ENCODE measurements at regions of chr4 and their contacts with region 1.

Region 1: GRCh38 chr4:184649026-184649970 is at the starts of genes CASP3 and PRIMPOL:
- DNase-seq: peak; percentile 90 to 99 (median 96)
- ATAC-seq: peak; percentile 85
- H3K4me3 ChIP-seq: peak within 1 kb of the TSS; percentile 93
- H3K4me3 Mint-ChIP-seq: peak within 1 kb of the TSS; percentile 96
- H3K27ac ChIP-seq: peak within 1 kb of the TSS; percentile 72 to 77
- H3K27ac Mint-ChIP-seq: peak within 1 kb of the TSS; percentile 96
- H3K4me1 ChIP-seq: peaks cover 37% of the 10 kb centered on the region
- H3K4me1 Mint-ChIP-seq: peaks cover 51% of the 10 kb centered on the region
- H3K27me3 ChIP-seq: no peaks in the 10 kb centered on the region
- H3K27me3 Mint-ChIP-seq: no peaks in the 10 kb centered on the region
- CTCF ChIP-seq: peak; percentile 24
- total RNA-seq, gene CASP3: 11.9 to 12.2 TPM
- total RNA-seq, gene PRIMPOL: 4.2 TPM

Region 2: DNA sequence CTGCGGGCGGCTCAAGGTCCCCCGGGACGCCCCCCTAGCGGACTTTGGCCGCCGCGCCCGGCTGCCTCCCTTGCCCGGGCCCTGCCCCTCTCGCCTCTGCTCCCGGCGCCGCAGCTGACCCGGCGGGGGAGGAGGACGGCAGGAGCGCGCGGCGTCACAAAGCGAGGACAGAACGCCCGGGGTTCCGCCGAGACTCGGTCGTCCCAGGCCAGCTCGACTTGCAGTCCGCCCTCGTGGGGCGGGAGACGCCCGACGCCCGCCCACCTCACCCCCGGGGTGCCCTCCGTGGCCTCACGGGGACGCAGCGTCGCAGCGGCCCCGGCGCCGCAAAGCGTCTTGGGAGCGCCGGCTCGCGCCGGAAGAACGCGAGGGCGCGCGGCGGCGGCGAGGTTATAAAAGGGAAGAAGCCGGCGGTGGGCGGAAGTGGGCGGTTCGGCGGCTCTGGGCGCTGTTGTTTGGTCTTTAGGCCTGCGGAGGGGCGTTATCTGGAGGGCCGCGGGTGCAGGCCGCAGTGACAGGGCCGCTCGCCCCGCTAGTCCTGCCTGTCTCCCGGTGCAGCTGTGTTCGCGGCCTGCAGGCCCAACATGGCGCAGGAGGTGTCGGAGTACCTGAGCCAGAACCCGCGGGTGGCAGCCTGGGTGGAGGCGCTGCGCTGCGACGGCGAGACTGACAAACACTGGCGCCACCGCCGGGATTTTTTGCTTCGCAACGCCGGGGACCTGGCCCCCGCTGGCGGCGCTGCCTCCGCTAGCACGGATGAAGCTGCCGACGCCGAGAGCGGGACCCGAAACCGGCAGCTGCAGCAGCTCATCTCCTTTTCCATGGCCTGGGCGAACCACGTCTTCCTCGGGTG is 1204.9 kb before region 1 on chr4 and contains the start of gene CDKN2AIP:
- CTCF ChIA-PET with region 1: no interaction called
- POLR2A ChIA-PET with region 1: interaction called, 3 read pairs
- intact Hi-C with region 1: loop called in 1 of 2 experiments (anchors 5 kb)
- DNase-seq: peak; percentile 89 to 98 (median 94)
- ATAC-seq: peak; percentile 82
- H3K4me3 ChIP-seq: peak within 1 kb of the TSS; percentile 94
- H3K4me3 Mint-ChIP-seq: peak within 1 kb of the TSS; percentile 98
- H3K27ac ChIP-seq: peak within 1 kb of the TSS; percentile 91
- H3K27ac Mint-ChIP-seq: peak within 1 kb of the TSS; percentile 96
- H3K4me1 ChIP-seq: peaks cover 26% of the 10 kb centered on the region
- H3K4me1 Mint-ChIP-seq: peaks cover 55% of the 10 kb centered on the region
- H3K27me3 ChIP-seq: no peaks in the 10 kb centered on the region
- H3K27me3 Mint-ChIP-seq: no peaks in the 10 kb centered on the region
- CTCF ChIP-seq: no peak
- total RNA-seq, gene CDKN2AIP: 55.7 to 56.9 TPM

Region 3: GRCh38 chr4:184408021-184408710 is 241.1 kb before region 1 on chr4:
- CTCF ChIA-PET with region 1: interaction called, 3 read pairs
- POLR2A ChIA-PET with region 1: no interaction called
- intact Hi-C with region 1: loop called in 1 of 2 experiments (anchors 5 kb)
- DNase-seq: no peak
- ATAC-seq: no peak
- H3K4me3 ChIP-seq: no peak overlapping the region
- H3K4me3 Mint-ChIP-seq: no peak overlapping the region
- H3K27ac ChIP-seq: peak overlapping the region in 1 of 2 donors; percentile 26
- H3K27ac Mint-ChIP-seq: no peak overlapping the region
- H3K4me1 ChIP-seq: peaks cover 30% of the 10 kb centered on the region
- H3K4me1 Mint-ChIP-seq: peaks cover 45% of the 10 kb centered on the region
- H3K27me3 ChIP-seq: no peaks in the 10 kb centered on the region
- H3K27me3 Mint-ChIP-seq: no peaks in the 10 kb centered on the region
- CTCF ChIP-seq: no peak

Region 4: GRCh38 chr4:184733654-184734524 is 84.6 kb after region 1 on chr4 and contains the start of gene CENPU:
- CTCF ChIA-PET with region 1: interaction called, 5 read pairs
- POLR2A ChIA-PET with region 1: interaction called, 35 read pairs
- intact Hi-C with region 1: loop called (anchors 1 to 10 kb)
- DNase-seq: peak; percentile 91 to 98 (median 93)
- ATAC-seq: peak; percentile 97
- H3K4me3 ChIP-seq: peak within 1 kb of the TSS; percentile 87
- H3K4me3 Mint-ChIP-seq: peak within 1 kb of the TSS; percentile 93
- H3K27ac ChIP-seq: no peak within 1 kb of the TSS
- H3K27ac Mint-ChIP-seq: peak within 1 kb of the TSS; percentile 74
- H3K4me1 ChIP-seq: peaks cover 13% of the 10 kb centered on the region
- H3K4me1 Mint-ChIP-seq: peaks cover 17% of the 10 kb centered on the region
- H3K27me3 ChIP-seq: no peaks in the 10 kb centered on the region
- H3K27me3 Mint-ChIP-seq: no peaks in the 10 kb centered on the region
- CTCF ChIP-seq: no peak
- total RNA-seq, gene CENPU: 1.9 to 2.8 TPM

Region 5: GRCh38 chr4:184825896-184826690 is 176.8 kb after region 1 on chr4 and contains the start of gene ACSL1:
- CTCF ChIA-PET with region 1: no interaction called
- POLR2A ChIA-PET with region 1: interaction called, 3 read pairs
- intact Hi-C with region 1: loop called (anchors 2 to 10 kb)
- DNase-seq: peak; percentile 58 to 90 (median 72)
- ATAC-seq: peak; percentile 85
- H3K4me3 ChIP-seq: peak within 1 kb of the TSS; percentile 59
- H3K4me3 Mint-ChIP-seq: peak within 1 kb of the TSS; percentile 97
- H3K27ac ChIP-seq: peak within 1 kb of the TSS in 1 of 2 donors; percentile 31
- H3K27ac Mint-ChIP-seq: peak within 1 kb of the TSS; percentile 92
- H3K4me1 ChIP-seq: peaks cover 23% of the 10 kb centered on the region
- H3K4me1 Mint-ChIP-seq: peaks cover 40% of the 10 kb centered on the region
- H3K27me3 ChIP-seq: no peaks in the 10 kb centered on the region
- H3K27me3 Mint-ChIP-seq: no peaks in the 10 kb centered on the region
- CTCF ChIP-seq: no peak
- total RNA-seq, gene ACSL1: 12.4 to 12.5 TPM

Region 6: GRCh38 chr4:185142912-185143595 is 493.8 kb after region 1 on chr4 and contains the start of gene SLC25A4:
- CTCF ChIA-PET with region 1: no interaction called
- POLR2A ChIA-PET with region 1: no interaction called
- intact Hi-C with region 1: loop called in 1 of 2 experiments (anchors 10 kb)
- DNase-seq: peak; percentile 59 to 91 (median 78)
- ATAC-seq: peak; percentile 93
- H3K4me3 ChIP-seq: peak within 1 kb of the TSS; percentile 72
- H3K4me3 Mint-ChIP-seq: peak within 1 kb of the TSS; percentile 96
- H3K27ac ChIP-seq: no peak within 1 kb of the TSS
- H3K27ac Mint-ChIP-seq: peak within 1 kb of the TSS; percentile 63
- H3K4me1 ChIP-seq: peaks cover 14% of the 10 kb centered on the region
- H3K4me1 Mint-ChIP-seq: peaks cover 18% of the 10 kb centered on the region
- H3K27me3 ChIP-seq: peaks cover 11 to 12% of the 10 kb centered on the region in 2 experiments
- H3K27me3 Mint-ChIP-seq: peaks cover 53% of the 10 kb centered on the region
- CTCF ChIP-seq: peak; percentile 34
- total RNA-seq, gene SLC25A4: 4.1 TPM

Region 7: DNA sequence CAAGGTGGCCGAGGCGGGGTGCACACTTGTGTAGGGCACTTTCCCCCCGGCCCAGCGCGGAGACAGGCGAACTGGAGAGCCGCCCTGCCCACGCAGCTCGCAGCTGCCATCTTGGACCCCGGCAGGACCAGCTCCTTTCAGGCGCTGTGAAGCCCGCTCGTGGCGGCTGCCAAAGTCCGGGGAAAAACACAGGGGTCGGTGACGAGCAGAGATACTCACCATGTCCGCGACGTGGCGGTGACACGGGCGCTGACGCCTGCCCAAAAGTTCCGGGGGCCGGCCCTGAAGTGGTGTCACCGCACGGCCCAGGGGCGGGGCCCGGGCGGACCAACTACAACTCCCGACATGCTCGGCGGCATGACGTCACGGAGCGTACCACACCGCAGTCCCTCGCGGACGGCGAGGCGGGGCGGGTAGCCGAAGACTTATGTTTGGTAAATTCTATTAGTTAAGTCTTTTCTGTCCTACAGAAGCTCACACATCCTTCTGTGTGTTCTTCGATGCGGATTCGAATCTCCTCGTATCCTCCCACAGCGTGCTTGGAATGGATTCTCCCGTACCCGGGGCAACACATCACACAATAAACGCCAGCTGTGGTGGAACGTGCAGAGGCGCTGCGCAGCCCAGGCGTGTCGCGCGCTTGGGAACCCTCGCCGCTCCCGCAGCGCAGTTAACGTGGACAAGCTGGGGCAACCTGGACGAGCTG is 776.5 kb after region 1 on chr4 and contains the start of gene UFSP2:
- CTCF ChIA-PET with region 1: no interaction called
- POLR2A ChIA-PET with region 1: interaction called, 3 read pairs
- intact Hi-C with region 1: loop called in 1 of 2 experiments (anchors 10 kb)
- DNase-seq: peak; percentile 78 to 97 (median 88)
- ATAC-seq: peak; percentile 85
- H3K4me3 ChIP-seq: peak within 1 kb of the TSS; percentile 99
- H3K4me3 Mint-ChIP-seq: peak within 1 kb of the TSS; percentile 94
- H3K27ac ChIP-seq: peak within 1 kb of the TSS; percentile 88 to 99
- H3K27ac Mint-ChIP-seq: peak within 1 kb of the TSS; percentile 91
- H3K4me1 ChIP-seq: peaks cover 18% of the 10 kb centered on the region
- H3K4me1 Mint-ChIP-seq: peaks cover 31% of the 10 kb centered on the region
- H3K27me3 ChIP-seq: no peaks in the 10 kb centered on the region
- H3K27me3 Mint-ChIP-seq: peaks cover 6% of the 10 kb centered on the region
- CTCF ChIP-seq: no peak
- total RNA-seq, gene UFSP2: 14.5 to 16.6 TPM